Esophagus muscularis mucosa (tissue), 4 donors: ENCODE measurements at regions of chr2 and their contacts with region 1.

Region 1: DNA sequence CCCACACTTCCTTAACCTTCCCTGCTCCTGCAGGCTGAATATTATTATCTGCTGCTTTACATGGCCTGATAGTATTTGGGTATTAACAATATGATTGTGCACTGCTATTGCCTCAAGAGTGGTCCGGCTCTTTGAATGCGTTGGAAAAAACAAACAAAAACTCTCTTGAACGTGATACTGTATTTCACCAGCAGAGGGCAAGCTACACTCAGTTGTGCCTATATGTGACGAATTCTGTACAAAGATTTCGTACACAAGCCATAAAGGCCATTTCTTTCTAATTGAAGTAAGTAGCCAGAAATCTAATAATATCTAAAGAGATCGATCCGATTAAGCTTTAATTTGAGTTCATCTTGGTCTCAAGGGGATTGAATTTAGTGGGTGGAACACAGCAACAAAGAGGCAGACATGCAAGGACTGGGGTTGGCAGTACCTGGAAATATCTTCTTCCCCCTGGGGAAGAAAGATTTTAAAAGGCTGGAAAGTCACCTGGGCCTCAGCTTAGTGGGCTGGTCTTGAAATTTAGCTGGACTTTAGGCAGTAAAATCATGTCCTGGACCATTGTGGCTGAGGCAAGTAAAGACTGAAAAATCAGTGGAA is 49.3 kb upstream of the RAB6D start:
- DNase-seq: no peak
- H3K4me3 ChIP-seq: no peak overlapping the region
- H3K27ac ChIP-seq: no peak overlapping the region
- H3K4me1 ChIP-seq: no peaks in the 10 kb centered on the region
- H3K27me3 ChIP-seq: peaks cover 0 to 10% (median 3%) of the 10 kb centered on the region in 4 donors
- CTCF ChIP-seq: peak; percentile 66 to 83 (median 68)
- EP300 ChIP-seq: no peak
- POLR2A ChIP-seq: no peak

Region 2: DNA sequence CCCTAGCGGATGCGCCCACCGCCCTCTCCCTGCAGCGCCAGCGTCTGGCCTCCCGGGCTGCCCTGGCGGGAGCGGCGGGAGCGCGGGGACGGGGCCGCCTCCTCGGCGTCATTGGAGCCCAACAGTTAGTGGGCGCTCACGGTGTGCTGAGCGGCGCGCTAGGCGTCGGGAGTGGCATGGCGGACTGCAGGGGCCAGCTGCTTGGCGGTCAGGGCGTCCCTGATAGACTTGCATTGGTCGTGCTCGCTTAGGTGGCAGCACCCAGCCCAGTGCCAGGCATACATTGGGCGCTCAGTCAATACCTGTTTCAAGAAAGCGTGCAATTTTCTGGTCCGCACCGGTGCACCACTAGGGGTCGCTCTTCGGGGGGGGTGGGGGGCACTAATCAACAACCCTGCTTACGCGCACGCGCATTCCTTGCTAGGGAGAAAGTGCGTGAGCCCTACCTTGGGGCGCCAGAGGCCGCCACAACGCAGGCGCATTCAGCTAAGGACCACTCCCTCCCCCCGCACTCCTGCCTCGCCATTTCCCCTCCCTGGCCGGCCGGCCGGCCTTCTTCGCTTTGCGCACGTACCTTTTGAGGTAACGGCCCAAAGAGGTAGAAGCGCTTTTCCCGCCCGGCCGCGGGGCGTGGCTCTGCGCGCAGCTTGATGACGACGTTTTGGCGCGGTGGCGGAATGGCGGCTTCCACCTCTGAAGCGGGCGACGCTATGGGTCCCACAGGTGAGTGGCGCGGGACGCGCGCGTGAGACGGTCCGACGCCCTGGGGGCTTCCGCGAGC is 79.4 kb after region 1 on chr2:
- intact Hi-C with region 1: loop called (anchors 5 kb)
- DNase-seq: peak; percentile 96
- H3K4me3 ChIP-seq: peak overlapping the region; percentile 88 to 93 (median 90)
- H3K27ac ChIP-seq: peak overlapping the region; percentile 88 to 92 (median 90)
- H3K4me1 ChIP-seq: peaks cover 23 to 39% (median 33%) of the 10 kb centered on the region in 4 donors
- H3K27me3 ChIP-seq: no peaks in the 10 kb centered on the region
- CTCF ChIP-seq: peak; percentile 55 to 81 (median 57)
- EP300 ChIP-seq: no peak
- POLR2A ChIP-seq: no peak

Region 3: DNA sequence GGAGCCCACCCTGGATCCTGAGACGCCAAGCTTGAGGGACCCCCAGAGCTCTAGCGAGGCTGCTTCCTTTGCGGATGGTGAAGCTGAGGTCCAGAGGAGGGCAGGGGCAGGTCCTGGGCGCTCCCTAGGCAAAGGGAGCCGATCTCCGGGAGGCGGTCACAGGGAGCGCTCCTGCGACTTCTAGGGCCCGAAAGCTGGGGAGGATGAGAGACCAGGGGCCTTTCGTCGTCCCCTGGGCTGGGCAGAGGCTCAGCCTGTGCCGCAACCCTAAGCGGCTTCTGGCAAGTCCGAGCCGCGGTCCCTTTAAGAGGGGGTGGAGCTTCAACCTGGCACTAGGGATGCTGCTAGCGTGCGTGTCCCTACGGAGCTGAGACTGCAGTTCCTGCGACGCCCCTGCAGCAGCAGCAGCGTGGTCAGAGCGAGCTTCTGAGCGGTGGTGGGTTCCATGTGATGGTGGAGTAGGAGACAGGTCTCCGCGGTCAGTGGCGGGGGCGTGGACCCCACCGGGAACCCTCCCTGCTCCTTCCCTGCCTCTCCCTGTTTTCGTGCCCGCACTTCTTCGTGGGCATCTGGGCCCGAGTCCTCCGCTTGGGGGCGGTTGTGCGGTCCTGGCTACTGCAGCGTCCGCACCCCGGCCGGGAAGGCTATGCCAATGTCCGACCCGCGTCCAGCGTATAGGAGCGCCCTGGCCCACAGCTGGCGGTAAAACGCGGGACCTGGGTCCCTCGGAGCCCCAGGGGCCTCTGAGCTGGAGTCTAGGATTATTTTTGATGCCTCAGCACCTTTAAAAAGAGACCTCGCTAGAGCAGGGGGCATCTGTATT is 269.1 kb after region 1 on chr2:
- intact Hi-C with region 1: no loop called
- DNase-seq: peak; percentile 95
- H3K4me3 ChIP-seq: peak overlapping the region; percentile 66 to 77 (median 76)
- H3K27ac ChIP-seq: peak overlapping the region; percentile 81 to 87 (median 84)
- H3K4me1 ChIP-seq: peaks cover 4 to 25% (median 15%) of the 10 kb centered on the region in 4 donors
- H3K27me3 ChIP-seq: peaks cover 0 to 7% (median 0%) of the 10 kb centered on the region in 4 donors
- CTCF ChIP-seq: peak in 2 of 3 experiments; percentile 17 to 24
- EP300 ChIP-seq: no peak
- POLR2A ChIP-seq: no peak